Dorsolateral prefrontal cortex (tissue), 120 donors: ENCODE measurements at regions of chr17 and their contacts with region 1.

Region 1: DNA sequence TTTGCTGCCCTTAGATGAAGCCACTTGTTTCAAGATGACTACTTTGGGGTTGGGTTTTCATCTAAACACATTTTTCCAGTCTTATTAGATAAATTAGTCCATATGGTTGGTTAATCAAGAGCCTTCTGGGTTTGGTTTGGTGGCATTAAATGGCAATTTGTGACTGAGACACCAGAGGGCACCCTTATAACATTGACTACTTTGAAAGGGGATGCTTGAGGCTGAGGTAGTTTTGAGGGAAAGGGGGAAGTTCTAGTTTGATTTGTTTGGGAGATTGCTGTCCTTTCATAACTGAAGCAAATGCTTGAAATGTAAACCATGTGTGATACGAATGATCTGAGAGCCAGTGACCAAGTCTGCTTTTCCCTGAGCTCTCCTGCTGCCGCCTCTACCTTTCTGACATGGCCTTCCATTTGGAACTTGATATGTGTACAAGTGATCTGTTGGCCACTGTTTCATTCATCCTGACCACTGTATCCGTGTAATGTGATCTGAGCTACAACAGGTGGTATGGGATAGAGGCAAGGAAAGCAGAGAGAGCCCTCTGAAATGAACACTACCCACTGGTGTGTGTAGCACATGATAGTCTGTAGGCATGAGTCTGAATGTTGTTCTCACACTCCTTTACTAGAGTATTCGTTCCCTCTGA is 5.8 kb upstream of the RARA start:
- DNase-seq: no peak
- H3K4me3 ChIP-seq: no peak overlapping the region
- H3K27ac ChIP-seq: no peak overlapping the region
- H3K27me3 ChIP-seq: no peaks in the 10 kb centered on the region
- CTCF ChIP-seq: peak; percentile 55 to 95 (median 84)

Region 2: DNA sequence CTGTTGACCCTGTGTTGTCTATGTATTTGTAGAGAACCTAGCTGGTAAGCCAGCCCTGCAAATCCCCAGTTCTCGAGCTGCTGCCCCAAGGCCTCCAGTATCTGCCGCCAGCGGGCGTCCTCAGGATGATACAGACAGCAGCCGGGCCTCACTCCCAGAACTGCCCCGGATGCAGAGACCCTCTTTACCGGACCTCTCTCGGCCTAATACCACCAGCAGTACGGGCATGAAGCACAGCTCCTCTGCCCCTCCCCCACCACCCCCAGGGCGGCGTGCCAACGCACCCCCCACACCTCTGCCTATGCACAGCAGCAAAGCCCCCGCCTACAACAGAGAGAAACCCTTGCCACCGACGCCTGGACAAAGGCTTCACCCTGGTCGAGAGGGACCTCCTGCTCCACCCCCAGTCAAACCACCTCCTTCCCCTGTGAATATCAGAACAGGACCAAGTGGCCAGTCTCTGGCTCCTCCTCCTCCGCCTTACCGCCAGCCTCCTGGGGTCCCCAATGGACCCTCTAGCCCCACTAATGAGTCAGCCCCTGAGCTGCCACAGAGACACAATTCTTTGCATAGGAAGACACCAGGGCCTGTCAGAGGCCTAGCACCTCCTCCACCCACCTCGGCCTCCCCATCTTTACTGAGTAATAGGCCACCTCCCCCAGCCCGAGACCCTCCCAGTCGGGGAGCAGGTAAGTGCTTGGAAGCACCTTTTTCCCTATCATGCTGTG is 38.5 kb before region 1 on chr17:
- intact Hi-C with region 1: no loop called
- DNase-seq: no peak
- H3K4me3 ChIP-seq: no peak overlapping the region
- H3K27ac ChIP-seq: peak overlapping the region in 4 of 59 donors; percentile 11 to 28 (median 16)
- H3K27me3 ChIP-seq: no peaks in the 10 kb centered on the region
- CTCF ChIP-seq: no peak

Region 3: DNA sequence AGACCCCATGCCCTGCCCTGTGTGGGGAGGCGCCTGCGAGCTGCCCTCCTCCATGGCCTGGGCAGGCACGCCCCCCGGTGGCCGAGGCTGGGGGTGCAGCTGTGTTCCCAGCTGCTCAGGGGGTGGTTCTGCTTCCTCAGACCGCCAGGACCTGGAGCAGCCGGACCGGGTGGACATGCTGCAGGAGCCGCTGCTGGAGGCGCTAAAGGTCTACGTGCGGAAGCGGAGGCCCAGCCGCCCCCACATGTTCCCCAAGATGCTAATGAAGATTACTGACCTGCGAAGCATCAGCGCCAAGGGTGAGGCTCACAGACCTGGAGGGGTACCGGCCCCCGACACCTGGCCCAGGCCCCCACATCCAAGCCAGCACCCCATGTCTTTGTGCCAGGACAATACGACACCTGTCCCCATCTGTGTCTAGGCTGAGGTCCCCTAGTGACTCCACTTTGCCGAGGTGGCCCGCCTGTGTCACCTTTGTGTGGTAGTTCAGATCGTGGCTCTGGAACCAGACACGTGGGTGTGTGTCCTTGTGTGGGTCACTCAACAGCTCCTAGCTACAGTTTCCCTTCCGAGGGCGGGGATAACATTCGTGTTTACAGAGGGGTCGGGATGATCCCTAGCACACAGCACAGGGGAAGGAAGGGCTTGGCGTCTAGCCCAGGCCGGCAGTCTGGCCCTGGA is 52.1 kb after region 1 on chr17:
- intact Hi-C with region 1: loop called (anchors 1 to 2 kb)
- DNase-seq: peak in 9 of 10 donors; percentile 49 to 85 (median 66)
- H3K4me3 ChIP-seq: no peak overlapping the region
- H3K27ac ChIP-seq: peak overlapping the region in 6 of 59 donors; percentile 11 to 59 (median 40)
- H3K27me3 ChIP-seq: no peaks in the 10 kb centered on the region
- CTCF ChIP-seq: peak; percentile 82 to 100 (median 98)

Region 4: GRCh38 chr17:40417609-40418427 is 114.7 kb after region 1 on chr17 and contains the start of gene TOP2A:
- intact Hi-C with region 1: loop called (anchors 2 to 10 kb)
- DNase-seq: peak; percentile 81 to 99 (median 96)
- H3K4me3 ChIP-seq: peak within 1 kb of the TSS; percentile 40 to 88 (median 68)
- H3K27ac ChIP-seq: peak within 1 kb of the TSS in 18 of 59 donors; percentile 25 to 80 (median 50)
- H3K27me3 ChIP-seq: peaks cover 0 to 18% (median 7%) of the 10 kb centered on the region in 45 donors
- CTCF ChIP-seq: peak in 11 of 56 donors; percentile 8 to 42 (median 20)
- total RNA-seq, gene TOP2A: 0.04 to 3.1 (median 0.42) TPM in 55 of 120 experiments, not detected in the others

Region 5: GRCh38 chr17:40422990-40423616 is 120.0 kb after region 1 on chr17:
- intact Hi-C with region 1: loop called in 1 of 2 experiments (anchors 10 kb)
- DNase-seq: no peak
- H3K4me3 ChIP-seq: no peak overlapping the region
- H3K27ac ChIP-seq: no peak overlapping the region
- H3K27me3 ChIP-seq: no peaks in the 10 kb centered on the region
- CTCF ChIP-seq: no peak

Region 6: GRCh38 chr17:40531051-40531991 is 228.2 kb after region 1 on chr17:
- intact Hi-C with region 1: loop called (anchors 5 kb)
- DNase-seq: peak in 1 of 10 donors; percentile 14
- H3K4me3 ChIP-seq: no peak overlapping the region
- H3K27ac ChIP-seq: no peak overlapping the region
- H3K27me3 ChIP-seq: peaks cover 0 to 4% (median 0%) of the 10 kb centered on the region in 45 donors
- CTCF ChIP-seq: no peak

Region 7: GRCh38 chr17:40536295-40537171 is 233.4 kb after region 1 on chr17:
- intact Hi-C with region 1: loop called (anchors 5 kb)
- DNase-seq: peak in 6 of 10 donors; percentile 34 to 70 (median 58)
- H3K4me3 ChIP-seq: no peak overlapping the region
- H3K27ac ChIP-seq: peak overlapping the region in 49 of 59 donors; percentile 6 to 83 (median 60)
- H3K27me3 ChIP-seq: no peaks in the 10 kb centered on the region
- CTCF ChIP-seq: no peak